SK-N-SH (cell line): ENCODE measurements at regions of chr13 and their contacts with region 1.

Region 1: GRCh38 chr13:23466144-23467002 is 32.9 kb upstream of the SACS start:
- DNase-seq: peak; percentile 82
- H3K4me3 ChIP-seq: peak overlapping the region; percentile 21 to 48; a peak in 3 of 4 replicates
- H3K27ac ChIP-seq: peak overlapping the region; percentile 65
- H3K4me1 ChIP-seq: peaks cover 6 to 20% of the 10 kb centered on the region in 2 experiments; a peak in 2 of 4 replicates
- H3K27me3 ChIP-seq: no peaks in the 10 kb centered on the region
- CTCF ChIP-seq: peak; percentile 71
- EP300 ChIP-seq: no peak
- RAD21 ChIP-seq: peak; percentile 83

Region 2: DNA sequence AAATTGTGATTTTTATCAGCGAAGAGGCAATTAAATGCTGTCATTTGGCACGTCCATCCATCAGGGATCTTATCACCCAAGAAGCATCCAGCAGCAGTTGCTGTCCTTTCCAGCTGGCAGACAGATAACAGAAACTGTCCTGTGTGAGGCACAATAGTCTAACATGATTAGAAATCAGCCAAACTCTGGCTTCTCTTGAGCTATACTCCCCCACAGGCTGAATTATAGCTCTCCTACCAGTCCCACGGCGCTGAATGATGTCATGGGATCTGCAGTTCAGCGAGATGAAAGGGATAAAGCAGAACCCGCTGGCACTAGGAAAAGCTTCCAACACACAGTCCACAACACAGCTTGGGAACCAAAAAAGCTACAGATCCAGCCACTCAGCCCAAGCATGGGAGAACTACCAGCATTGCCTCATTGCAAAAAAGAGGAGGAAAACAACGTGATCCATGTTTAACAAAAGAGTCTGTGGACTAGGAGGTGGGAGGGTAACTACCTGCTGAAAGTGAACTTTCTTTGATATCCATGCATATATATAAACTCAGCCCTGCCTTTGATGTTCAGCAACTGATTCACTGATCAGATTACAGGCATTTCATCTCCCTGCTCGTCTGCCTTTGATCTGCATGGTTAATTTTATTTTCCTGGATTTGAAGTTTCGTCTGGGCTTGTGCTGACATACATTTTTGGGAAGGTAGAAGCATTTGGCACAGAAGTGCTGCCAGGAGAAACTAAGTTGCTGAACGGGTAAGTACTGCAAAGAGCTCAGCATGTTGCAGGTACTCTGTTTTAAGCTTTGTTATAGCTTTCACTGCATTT is 103.9 kb after region 1 on chr13 and contains the start of gene TNFRSF19:
- CTCF ChIA-PET with region 1: interaction called, 26 read pairs
- POLR2A ChIA-PET with region 1: interaction called, 18 read pairs
- DNase-seq: peak; percentile 80
- H3K4me3 ChIP-seq: peak within 1 kb of the TSS; percentile 41 to 66
- H3K27ac ChIP-seq: peak within 1 kb of the TSS; percentile 87 to 94
- H3K4me1 ChIP-seq: peaks cover 0 to 30% of the 10 kb centered on the region in 2 experiments; a peak in 2 of 4 replicates
- H3K27me3 ChIP-seq: no peaks in the 10 kb centered on the region
- CTCF ChIP-seq: no peak
- EP300 ChIP-seq: peak; percentile 36 to 97; a peak in 3 of 4 replicates
- RAD21 ChIP-seq: peak; percentile 40; the same call in 1 of the 2 replicates
- polyA plus RNA-seq, gene TNFRSF19: 4.6 and 6.8 TPM in 2 replicates

Region 3: DNA sequence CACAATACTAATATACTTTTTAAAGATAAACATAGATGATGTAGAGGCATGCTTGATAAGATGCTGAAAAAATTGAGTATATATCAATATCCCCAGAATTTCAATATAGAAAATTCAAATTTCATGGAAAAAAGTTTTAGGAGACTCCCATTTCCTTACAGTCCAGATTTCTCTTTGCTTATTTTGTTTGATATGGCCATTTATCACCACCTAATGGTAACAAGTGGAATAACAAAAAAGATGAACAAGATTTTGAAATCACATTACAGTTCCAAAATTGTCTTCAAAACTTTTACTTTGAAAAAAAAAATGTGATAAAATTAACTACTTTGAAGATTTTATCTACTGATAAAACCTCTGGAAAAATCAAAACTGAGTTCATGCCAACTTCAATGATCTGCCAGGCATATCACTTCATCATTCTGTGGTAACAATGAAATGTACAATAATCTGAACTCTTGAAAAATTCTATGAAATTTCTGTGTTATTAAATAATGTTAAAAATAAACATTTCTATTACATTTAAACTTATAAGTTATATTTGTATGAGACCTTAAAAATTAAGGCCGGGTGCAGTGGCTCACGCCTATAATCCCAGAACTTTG is 405.3 kb after region 1 on chr13:
- CTCF ChIA-PET with region 1: interaction called, 19 read pairs
- POLR2A ChIA-PET with region 1: no interaction called
- DNase-seq: peak; percentile 46
- H3K4me3 ChIP-seq: no peak overlapping the region
- H3K27ac ChIP-seq: 0 out of 4 replicates have a peak overlapping the region, but pooled peaks of 1 of the 2 experiments have one; percentile 11
- H3K4me1 ChIP-seq: peaks cover 2 to 6% of the 10 kb centered on the region in 2 experiments; a peak in 1 of 4 replicates
- H3K27me3 ChIP-seq: no peaks in the 10 kb centered on the region
- CTCF ChIP-seq: peak; percentile 70
- EP300 ChIP-seq: no peak
- RAD21 ChIP-seq: peak; percentile 84